ENCODE measurements at regions of chr17 and their contacts with region 1.

Region 1: GRCh38 chr17:47066841-47067682 is 88.0 kb upstream of the RPRML start:
- DNase-seq: peak; percentile 92
- H3K4me3 Mint-ChIP-seq: peak overlapping the region; percentile 91
- H3K27ac Mint-ChIP-seq: peak overlapping the region; percentile 94
- H3K4me1 Mint-ChIP-seq: peaks cover 23% of the 10 kb centered on the region
- H3K27me3 Mint-ChIP-seq: no peaks in the 10 kb centered on the region

Region 2: DNA sequence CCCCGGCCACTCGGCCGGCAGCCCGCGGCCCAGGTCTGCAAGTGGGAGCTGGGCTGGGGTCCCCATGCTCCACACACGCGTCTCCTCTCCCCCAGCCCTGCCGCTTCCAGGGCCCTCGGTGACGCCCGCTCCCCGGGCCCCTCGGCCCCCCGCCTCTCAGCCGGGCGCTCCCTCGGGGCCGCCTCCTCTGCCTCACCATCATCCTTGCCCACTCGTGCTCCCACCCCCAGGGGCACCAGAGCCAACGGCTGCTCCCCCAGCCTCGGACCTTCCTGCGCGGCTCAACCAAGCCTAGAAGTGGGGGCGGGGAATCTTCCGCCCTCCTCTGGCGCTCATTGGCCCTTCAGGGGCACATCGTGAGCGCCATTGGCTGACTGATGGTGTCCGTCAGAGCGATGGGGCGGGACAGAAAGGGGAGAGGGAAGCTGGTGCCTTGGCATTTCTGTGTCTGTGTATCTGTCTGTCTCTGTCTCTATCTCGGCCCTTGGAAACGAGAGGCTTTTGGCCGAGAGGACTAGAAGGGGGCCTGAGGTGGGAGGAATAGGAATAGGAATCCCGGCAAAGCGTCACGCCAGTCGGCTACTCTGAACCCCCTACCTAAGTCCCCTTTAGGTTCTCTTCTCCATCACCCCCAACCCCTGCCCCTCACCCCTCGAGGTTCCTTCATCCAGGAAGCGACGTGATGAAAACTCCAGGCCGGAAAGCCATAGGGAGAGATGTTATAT is 33.1 kb after region 1 on chr17:
- intact Hi-C with region 1: loop called (anchors 2 kb)
- DNase-seq: peak; percentile 98
- H3K4me3 Mint-ChIP-seq: peak overlapping the region; percentile 93
- H3K27ac Mint-ChIP-seq: peak overlapping the region; percentile 99
- H3K4me1 Mint-ChIP-seq: peaks cover 10% of the 10 kb centered on the region
- H3K27me3 Mint-ChIP-seq: peaks cover 3% of the 10 kb centered on the region

Region 3: GRCh38 chr17:47279062-47279736 is 212.1 kb after region 1 on chr17:
- intact Hi-C with region 1: no loop called
- DNase-seq: no peak
- H3K4me3 Mint-ChIP-seq: no peak overlapping the region
- H3K27ac Mint-ChIP-seq: no peak overlapping the region
- H3K4me1 Mint-ChIP-seq: peaks cover 4% of the 10 kb centered on the region
- H3K27me3 Mint-ChIP-seq: peaks cover 20% of the 10 kb centered on the region